Activated naive CD4-positive, alpha-beta T cell treated with anti-CD3 and anti-CD28 coated beads, Interleukin-2, amount 10 ng/mL, durations not matched to agents 7 days and 5 days (primary cell): ENCODE measurements at regions of chr15 and their contacts with region 1.

Region 1: DNA sequence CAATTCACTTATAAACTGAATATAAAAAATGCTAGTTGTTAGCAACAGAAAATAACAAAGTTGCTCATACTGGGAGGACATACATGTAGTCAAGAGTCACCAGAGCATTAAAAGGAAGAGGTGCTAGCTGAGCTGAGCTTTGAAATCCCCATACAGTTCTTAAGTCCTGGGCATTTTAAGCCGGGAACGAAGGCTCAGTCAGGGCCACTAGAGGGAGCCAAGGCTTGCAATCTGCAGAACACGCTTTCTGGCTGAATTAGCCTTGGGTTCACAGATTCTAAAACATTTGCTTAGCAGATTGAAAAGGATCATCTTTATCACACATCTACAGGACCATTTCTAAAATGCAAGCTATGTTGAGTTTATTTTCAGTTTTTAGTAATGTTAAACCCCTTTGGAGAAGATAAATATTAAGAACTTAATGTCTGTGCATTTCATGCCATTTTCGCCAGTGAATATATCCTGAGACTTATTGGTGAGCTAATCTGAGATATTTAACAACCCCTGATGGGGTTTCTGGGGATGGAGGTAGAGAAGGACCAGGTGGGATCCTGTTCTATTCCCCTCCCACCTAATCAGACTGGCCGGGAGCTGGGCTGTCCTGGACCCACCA is 26.3 kb upstream of the MNS1 start:
- DNase-seq: peak; percentile 73
- H3K4me3 Mint-ChIP-seq: no peak overlapping the region
- H3K27ac Mint-ChIP-seq: no peak overlapping the region
- H3K4me1 Mint-ChIP-seq: peaks cover 9% of the 10 kb centered on the region
- H3K27me3 Mint-ChIP-seq: peaks cover 23% of the 10 kb centered on the region

Region 2: GRCh38 chr15:56869573-56869972 is 378.4 kb after region 1 on chr15:
- CTCF ChIA-PET with region 1: interaction called, 137 read pairs
- DNase-seq: peak; percentile 52
- H3K4me3 Mint-ChIP-seq: no peak overlapping the region
- H3K27ac Mint-ChIP-seq: no peak overlapping the region
- H3K4me1 Mint-ChIP-seq: no peaks in the 10 kb centered on the region
- H3K27me3 Mint-ChIP-seq: no peaks in the 10 kb centered on the region

Region 3: GRCh38 chr15:57306161-57306943 is 815.1 kb after region 1 on chr15:
- CTCF ChIA-PET with region 1: interaction called, 17 read pairs
- DNase-seq: peak; percentile 87
- H3K4me3 Mint-ChIP-seq: peak overlapping the region; percentile 53
- H3K27ac Mint-ChIP-seq: peak overlapping the region; percentile 64
- H3K4me1 Mint-ChIP-seq: peaks cover 5% of the 10 kb centered on the region
- H3K27me3 Mint-ChIP-seq: peaks cover 43% of the 10 kb centered on the region